ENCODE measurements at regions of chr18 and their contacts with region 1.

Region 1: DNA sequence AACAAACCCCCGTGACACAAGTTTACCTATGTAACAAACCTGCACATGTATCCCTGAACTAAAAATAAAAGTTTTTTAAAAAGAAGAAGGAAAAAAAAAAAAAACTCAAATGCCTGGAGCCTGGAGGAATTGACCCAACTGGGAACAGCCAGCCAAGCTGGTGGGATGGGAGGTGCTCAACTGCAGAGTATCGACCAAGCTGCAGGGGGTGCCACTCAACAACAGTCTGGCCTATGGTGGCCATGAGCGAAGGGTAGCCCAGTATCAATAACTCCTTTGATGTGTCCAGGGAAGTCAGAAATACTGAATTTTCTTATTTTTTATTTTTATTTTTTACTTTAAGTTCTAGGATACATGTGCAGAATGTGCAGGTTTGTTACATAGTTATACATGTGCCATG is 310.3 kb upstream of the DLGAP1 start:
- DNase-seq: no peak
- H3K4me3 ChIP-seq: no peak overlapping the region
- H3K27ac ChIP-seq: no peak overlapping the region
- H3K4me1 ChIP-seq: no peaks in the 10 kb centered on the region
- H3K27me3 ChIP-seq: peaks cover 8% of the 10 kb centered on the region
- CTCF ChIP-seq: peak; percentile 24; the same call in 1 of the 2 replicates

Region 2: DNA sequence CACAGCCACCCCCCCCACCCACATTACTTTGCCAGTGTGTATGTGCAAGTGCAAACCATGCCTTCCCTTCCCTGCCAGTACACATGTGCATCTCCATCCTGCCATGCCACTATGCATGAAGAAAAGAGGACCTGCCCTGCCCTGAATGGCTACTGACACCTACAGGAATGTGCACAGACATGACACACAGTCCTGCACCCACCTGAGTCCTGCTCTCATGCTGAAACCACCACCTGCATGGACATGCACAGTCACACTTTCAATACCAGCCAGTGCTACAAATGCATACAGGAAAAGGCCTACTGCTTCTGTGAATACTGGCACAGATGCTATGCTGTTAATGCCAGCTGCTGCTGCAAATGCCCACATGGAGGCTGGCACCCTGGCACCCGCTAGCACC is 24.1 kb after region 1 on chr18:
- CTCF ChIA-PET with region 1: no interaction called
- POLR2A ChIA-PET with region 1: no interaction called
- intact Hi-C with region 1: no loop called
- DNase-seq: no peak
- H3K4me3 ChIP-seq: no peak overlapping the region
- H3K27ac ChIP-seq: no peak overlapping the region
- H3K4me1 ChIP-seq: no peaks in the 10 kb centered on the region
- H3K27me3 ChIP-seq: peaks cover 15% of the 10 kb centered on the region
- CTCF ChIP-seq: no peak

Region 3: DNA sequence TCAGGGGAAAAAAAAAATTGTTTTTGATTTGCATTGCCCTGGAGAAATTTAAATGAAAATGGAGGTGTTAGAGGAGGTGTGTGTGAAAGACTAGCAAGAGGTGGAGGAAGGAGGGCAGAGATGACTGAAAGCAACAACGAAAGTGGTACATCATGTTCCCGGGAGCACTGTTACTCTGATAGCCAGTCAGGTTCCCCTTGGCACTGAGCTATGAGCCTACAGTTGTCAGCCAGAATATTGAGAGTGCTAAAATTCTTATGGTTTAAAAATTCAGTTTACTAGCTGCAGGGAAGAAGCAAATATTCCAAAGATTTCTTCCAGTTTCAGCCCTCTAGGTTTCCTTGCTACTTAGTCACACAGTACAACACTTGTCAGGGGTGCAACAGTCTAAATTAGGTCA is 56.4 kb after region 1 on chr18:
- CTCF ChIA-PET with region 1: no interaction called
- POLR2A ChIA-PET with region 1: no interaction called
- intact Hi-C with region 1: loop called (anchors 10 kb)
- DNase-seq: no peak
- H3K4me3 ChIP-seq: no peak overlapping the region
- H3K27ac ChIP-seq: no peak overlapping the region
- H3K4me1 ChIP-seq: no peaks in the 10 kb centered on the region
- H3K27me3 ChIP-seq: peaks cover 49% of the 10 kb centered on the region
- CTCF ChIP-seq: no peak

Region 4: GRCh38 chr18:4908328-4908727 is 142.9 kb after region 1 on chr18:
- CTCF ChIA-PET with region 1: no interaction called
- POLR2A ChIA-PET with region 1: no interaction called
- intact Hi-C with region 1: no loop called
- DNase-seq: no peak
- H3K4me3 ChIP-seq: no peak overlapping the region
- H3K27ac ChIP-seq: no peak overlapping the region
- H3K4me1 ChIP-seq: no peaks in the 10 kb centered on the region
- H3K27me3 ChIP-seq: peaks cover 26% of the 10 kb centered on the region
- CTCF ChIP-seq: no peak

Region 5: DNA sequence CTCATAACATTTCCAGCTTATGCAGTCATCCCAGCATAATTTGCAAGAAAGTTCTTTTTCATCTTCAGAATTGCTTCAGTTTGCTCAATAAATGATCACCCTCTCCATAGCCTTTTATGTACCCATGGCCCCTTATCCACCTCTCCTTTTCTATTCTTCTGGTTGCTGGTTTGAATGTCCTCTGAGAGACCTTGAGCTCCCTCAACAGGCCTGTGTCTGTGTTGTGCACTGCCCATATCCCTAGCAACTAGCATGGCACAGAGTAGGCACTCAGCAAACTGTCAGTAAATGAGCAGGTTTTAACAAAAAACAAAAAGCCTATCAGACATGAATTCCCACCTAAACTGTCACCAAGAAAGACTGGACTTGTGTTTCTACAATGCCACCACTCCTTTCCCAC is 271.1 kb after region 1 on chr18:
- CTCF ChIA-PET with region 1: no interaction called
- POLR2A ChIA-PET with region 1: no interaction called
- intact Hi-C with region 1: no loop called
- DNase-seq: no peak
- H3K4me3 ChIP-seq: no peak overlapping the region
- H3K27ac ChIP-seq: no peak overlapping the region
- H3K4me1 ChIP-seq: no peaks in the 10 kb centered on the region
- H3K27me3 ChIP-seq: no peaks in the 10 kb centered on the region
- CTCF ChIP-seq: 0 out of 2 replicates have a peak, but pooled peaks have one; percentile 18

Region 6: GRCh38 chr18:5295981-5296705 is 530.7 kb after region 1 on chr18:
- CTCF ChIA-PET with region 1: no interaction called
- POLR2A ChIA-PET with region 1: no interaction called
- intact Hi-C with region 1: no loop called
- DNase-seq: peak; percentile 97
- H3K4me3 ChIP-seq: peak overlapping the region; percentile 77
- H3K27ac ChIP-seq: peak overlapping the region; percentile 90
- H3K4me1 ChIP-seq: peaks cover 4% of the 10 kb centered on the region
- H3K27me3 ChIP-seq: peaks cover 25% of the 10 kb centered on the region
- CTCF ChIP-seq: no peak

Measured in A673 (cell line).